ENCODE measurements at regions of chr5 and their contacts with region 1.

Region 1: DNA sequence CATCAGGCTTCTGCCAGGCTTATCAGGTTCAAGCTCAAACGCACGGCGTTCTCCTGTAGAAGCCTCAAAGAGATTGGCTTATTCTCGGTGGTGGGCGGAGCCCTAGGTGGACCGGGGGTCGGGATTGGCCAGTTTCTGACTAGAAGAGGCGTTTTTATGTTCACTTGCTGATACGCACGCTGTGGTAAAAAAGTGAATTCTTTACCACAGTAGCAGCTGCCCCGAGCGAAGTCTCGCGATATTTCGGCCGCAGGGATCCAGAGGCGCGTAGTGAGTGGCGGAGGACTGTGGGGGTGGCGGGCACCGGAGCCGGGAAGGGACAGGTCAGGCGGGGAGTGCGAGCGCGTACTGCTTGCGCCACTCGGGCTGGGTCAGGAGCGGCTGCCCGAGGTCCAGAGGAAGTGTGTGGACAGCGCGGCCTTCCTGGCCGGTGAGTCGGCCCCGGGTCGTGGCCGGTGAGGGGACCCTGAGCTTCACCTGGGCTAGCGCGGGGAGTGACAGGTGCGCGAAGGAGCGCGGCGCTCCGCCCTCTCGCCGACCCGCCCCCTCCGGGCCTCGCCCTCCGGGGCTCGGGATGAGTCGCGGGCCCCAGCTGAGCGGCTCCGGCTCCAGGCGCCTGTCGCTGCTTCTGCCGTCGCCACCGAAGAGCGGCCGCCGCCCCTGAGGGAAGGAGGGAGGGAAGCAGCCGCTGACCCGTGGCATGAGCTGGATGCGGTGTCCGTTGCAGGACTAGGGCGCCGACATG is at the start of gene DMXL1:
- DNase-seq: peak; percentile 97 to 98
- H3K4me3 ChIP-seq: peak within 1 kb of the TSS; percentile 95
- H3K27ac ChIP-seq: peak within 1 kb of the TSS; percentile 80
- H3K4me1 ChIP-seq: peaks cover 16% of the 10 kb centered on the region
- H3K27me3 ChIP-seq: no peaks in the 10 kb centered on the region
- CTCF ChIP-seq: no peak
- total RNA-seq, gene DMXL1: 19.7 and 27.3 TPM in 2 replicates

Region 2: DNA sequence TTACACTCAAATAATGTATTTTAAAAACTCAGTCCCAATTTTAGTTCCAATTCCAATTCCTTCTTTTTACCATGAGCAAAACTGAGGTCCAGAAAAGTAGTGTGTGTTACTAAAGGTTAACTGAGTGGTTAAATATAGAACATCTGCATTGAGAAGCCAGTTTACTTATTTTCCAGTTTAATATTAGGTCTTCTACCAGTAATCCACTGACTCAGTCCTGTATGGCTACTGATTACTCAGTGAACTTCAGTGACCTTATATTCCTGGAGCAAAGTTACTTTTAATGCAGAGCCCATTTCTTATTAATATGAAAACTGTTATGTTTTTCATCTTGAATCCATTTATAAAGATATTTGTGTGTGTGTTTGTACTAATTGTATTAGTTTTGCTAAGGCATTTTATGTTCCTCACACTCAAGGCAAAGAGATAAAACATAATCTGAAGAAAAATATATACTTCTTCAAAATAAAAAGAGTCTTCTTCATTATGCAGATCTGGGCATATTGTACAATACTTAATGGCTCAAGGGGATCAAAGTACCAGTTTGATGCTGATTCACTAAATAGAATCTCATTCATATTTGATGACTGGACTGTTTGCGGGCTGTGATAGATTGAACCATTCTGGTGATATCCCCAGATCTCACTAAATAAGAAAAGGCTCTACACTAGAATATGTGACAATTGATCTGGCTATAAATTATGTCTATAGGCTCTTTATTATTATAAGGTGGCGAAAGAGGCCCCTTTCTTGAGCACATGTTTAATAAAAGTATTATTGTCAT is 60.7 kb after region 1 on chr5:
- CTCF ChIA-PET with region 1: no interaction called
- POLR2A ChIA-PET with region 1: interaction called, 10 read pairs
- intact Hi-C with region 1: no loop called
- DNase-seq: no peak
- H3K4me3 ChIP-seq: no peak overlapping the region
- H3K27ac ChIP-seq: no peak overlapping the region
- H3K4me1 ChIP-seq: no peaks in the 10 kb centered on the region
- H3K27me3 ChIP-seq: no peaks in the 10 kb centered on the region
- CTCF ChIP-seq: no peak